Colonic mucosa (tissue), 4 donors: ENCODE measurements at regions of chr10 and their contacts with region 1.

Region 1: GRCh38 chr10:99698504-99699080 is 33.3 kb downstream of the COX15 start:
- DNase-seq: no peak
- H3K4me3 ChIP-seq: no peak overlapping the region
- H3K27ac ChIP-seq: no peak overlapping the region
- H3K4me1 ChIP-seq: no peaks in the 10 kb centered on the region
- H3K27me3 ChIP-seq: no peaks in the 10 kb centered on the region
- CTCF ChIP-seq: no peak

Region 2: DNA sequence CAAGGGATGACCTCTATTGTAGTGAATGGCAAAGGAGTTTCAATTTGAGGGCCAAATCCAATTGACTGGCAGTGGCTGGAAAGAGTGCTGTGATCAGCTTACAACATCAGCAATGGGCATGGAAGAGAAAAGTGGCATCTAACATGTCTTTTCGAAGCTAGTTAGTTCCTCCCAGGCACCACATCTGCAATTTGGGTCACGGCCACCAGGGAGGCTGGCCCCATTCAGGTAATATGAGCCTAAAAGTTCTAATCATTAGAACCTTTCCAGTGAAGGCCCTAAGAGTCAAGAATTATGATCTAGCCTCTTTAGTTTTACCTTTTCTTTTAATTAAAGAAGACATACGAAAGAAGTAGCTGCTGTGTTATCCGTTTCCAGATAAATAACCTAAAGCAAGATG is 1685.5 kb before region 1 on chr10:
- intact Hi-C with region 1: no loop called
- DNase-seq: no peak
- H3K4me3 ChIP-seq: no peak overlapping the region
- H3K27ac ChIP-seq: no peak overlapping the region
- H3K4me1 ChIP-seq: no peaks in the 10 kb centered on the region
- H3K27me3 ChIP-seq: no peaks in the 10 kb centered on the region
- CTCF ChIP-seq: no peak

Region 3: GRCh38 chr10:99396471-99396870 is 302.1 kb before region 1 on chr10:
- intact Hi-C with region 1: no loop called
- DNase-seq: no peak
- H3K4me3 ChIP-seq: no peak overlapping the region
- H3K27ac ChIP-seq: no peak overlapping the region
- H3K4me1 ChIP-seq: no peaks in the 10 kb centered on the region
- H3K27me3 ChIP-seq: no peaks in the 10 kb centered on the region
- CTCF ChIP-seq: no peak

Region 4: GRCh38 chr10:99560277-99561126 is 138.1 kb before region 1 on chr10:
- intact Hi-C with region 1: loop called (anchors 5 kb)
- DNase-seq: peak; percentile 75
- H3K4me3 ChIP-seq: no peak overlapping the region
- H3K27ac ChIP-seq: no peak overlapping the region
- H3K4me1 ChIP-seq: no peaks in the 10 kb centered on the region
- H3K27me3 ChIP-seq: no peaks in the 10 kb centered on the region
- CTCF ChIP-seq: peak; percentile 80